ENCODE measurements at regions of chr1 and their contacts with region 1.

Region 1: DNA sequence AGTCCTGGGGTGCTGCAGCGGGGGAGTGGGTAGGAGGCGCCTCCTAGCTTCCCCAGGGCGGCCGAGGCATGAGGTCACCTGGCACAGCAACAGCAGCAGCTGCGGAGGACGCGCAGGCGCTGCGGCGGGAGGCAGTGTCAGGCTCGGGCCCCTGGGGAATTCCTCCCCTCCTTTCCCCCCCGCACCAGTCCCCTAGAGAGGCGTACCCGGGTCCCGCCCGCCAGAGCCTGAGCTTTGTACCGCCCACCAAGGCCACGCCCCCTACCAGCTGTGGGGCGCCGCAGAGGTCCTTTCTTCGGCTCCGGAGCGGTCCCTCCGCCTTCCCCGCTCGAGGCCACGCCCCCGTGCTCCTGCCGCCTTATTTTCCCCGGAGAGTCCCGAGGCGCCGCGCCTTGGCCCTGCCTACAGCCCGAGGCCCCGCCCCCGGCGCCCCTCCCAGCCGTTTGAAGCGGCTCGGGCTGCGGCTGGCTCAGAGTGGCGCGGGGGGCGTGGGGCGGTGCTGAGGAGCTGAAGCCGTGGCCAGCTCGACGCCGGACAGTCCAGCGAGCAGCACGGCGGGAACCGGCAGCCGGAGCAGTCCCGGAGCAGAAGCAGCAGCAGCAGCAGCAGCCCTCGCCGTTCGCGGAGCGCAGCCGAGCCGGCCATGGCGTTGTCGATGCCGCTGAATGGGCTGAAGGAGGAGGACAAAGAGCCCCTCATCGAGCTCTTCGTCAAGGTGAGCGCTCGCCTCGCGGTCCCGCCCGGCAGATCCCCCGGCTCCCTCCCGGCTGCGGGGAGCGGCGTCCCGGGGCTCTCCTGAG is at the start of gene CLIC4:
- DNase-seq: peak; percentile 94
- ATAC-seq: peak; percentile 93
- H3K4me3 ChIP-seq: peak within 1 kb of the TSS; percentile 62 to 80
- H3K27ac ChIP-seq: peak within 1 kb of the TSS; percentile 67
- H3K4me1 ChIP-seq: peaks cover 20 to 42% of the 10 kb centered on the region in 2 experiments
- H3K27me3 ChIP-seq: no peaks in the 10 kb centered on the region
- CTCF ChIP-seq: no peak
- POLR2A ChIP-seq: peak; percentile 42
- RAD21 ChIP-seq: peak; percentile 54
- total RNA-seq, gene CLIC4: 77.2 TPM

Region 2: DNA sequence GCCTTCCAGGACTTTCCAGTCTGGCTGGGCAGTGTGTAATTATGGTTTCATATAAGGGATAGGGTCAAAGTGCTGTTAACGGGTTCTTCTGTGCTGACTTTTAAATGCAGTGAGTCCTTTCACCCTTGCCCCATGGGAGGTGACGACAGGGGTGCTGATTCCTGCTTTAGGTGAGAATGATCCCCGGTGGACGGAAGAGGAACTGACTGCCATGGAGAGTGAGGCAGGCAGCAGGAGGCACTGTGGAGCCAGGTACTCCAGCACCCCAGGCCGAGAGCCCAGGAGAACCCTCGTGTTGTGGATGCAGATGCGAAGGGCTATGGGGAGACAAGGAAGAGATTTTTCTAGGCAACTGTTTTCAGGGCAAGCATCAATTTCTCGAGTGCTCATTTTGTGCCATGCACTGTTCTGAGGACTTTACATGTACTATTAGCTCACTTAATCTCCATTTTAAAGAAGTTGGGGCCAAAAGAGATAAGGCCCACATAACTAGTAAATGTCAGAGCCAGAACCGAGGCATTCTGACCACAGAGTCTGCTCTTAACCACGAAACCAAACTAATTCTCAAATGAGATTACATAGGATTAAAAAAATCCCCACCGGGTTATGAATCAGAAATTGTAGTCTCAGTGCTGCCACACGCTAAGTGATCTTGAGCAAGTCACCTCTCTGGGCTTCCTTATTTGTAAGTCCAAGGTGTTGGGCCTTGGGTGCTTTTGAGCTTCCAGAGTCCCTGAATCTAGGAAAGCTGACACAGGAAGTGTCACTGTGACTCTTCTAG is 359.8 kb before region 1 on chr1:
- CTCF ChIA-PET with region 1: no interaction called
- POLR2A ChIA-PET with region 1: no interaction called
- RAD21 ChIA-PET with region 1: no interaction called
- intact Hi-C with region 1: no loop called
- DNase-seq: no peak
- ATAC-seq: peak; percentile 92
- H3K4me3 ChIP-seq: no peak overlapping the region
- H3K27ac ChIP-seq: no peak overlapping the region
- H3K4me1 ChIP-seq: peaks cover 0 to 20% of the 10 kb centered on the region in 2 experiments; a peak in 2 of 4 replicates
- H3K27me3 ChIP-seq: no peaks in the 10 kb centered on the region
- CTCF ChIP-seq: peak; percentile 97 to 99 (median 98)
- POLR2A ChIP-seq: no peak
- RAD21 ChIP-seq: peak; percentile 81

Region 3: DNA sequence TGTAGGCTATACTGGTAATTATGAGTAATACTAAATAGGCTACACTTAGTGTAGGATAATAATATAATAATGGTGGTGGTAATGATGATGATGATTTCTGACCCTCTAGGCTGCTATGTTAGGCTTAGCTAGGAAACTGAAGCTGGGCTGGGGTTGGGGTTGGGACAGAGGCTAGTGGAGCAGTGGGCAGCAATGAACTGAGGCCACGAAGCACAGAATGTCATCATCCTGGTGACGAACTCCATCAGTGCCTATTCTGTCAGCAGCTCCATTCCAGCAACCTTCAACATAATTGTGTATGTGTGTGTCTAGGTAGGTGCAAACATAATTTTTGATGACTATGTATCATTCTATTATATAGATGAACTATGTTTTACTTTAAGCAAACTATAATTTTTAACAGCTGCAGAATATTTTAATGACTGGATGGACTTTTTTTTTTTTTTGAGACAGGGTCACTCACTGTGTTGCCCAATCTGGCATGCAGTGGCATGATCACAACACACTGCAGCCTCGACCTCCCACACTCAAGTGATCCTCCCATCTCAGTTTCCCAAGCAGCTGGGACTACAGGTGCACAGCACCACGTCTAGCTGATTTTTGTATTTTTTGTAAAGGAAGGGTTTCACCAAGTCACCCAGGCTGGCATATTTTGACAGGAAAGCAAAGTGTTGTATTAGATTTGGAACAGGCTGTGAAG is 12.8 kb before region 1 on chr1:
- CTCF ChIA-PET with region 1: interaction called, 7 read pairs
- POLR2A ChIA-PET with region 1: interaction called, 12 read pairs
- RAD21 ChIA-PET with region 1: no interaction called
- intact Hi-C with region 1: no loop called
- DNase-seq: no peak
- ATAC-seq: no peak
- H3K4me3 ChIP-seq: no peak overlapping the region
- H3K27ac ChIP-seq: no peak overlapping the region
- H3K4me1 ChIP-seq: peaks cover 0 to 15% of the 10 kb centered on the region in 2 experiments; a peak in 3 of 4 replicates
- H3K27me3 ChIP-seq: no peaks in the 10 kb centered on the region
- CTCF ChIP-seq: no peak
- POLR2A ChIP-seq: no peak
- RAD21 ChIP-seq: no peak

Region 4: GRCh38 chr1:24779689-24780464 is 34.8 kb after region 1 on chr1:
- CTCF ChIA-PET with region 1: no interaction called
- POLR2A ChIA-PET with region 1: no interaction called
- RAD21 ChIA-PET with region 1: no interaction called
- intact Hi-C with region 1: no loop called
- DNase-seq: no peak
- ATAC-seq: no peak
- H3K4me3 ChIP-seq: no peak overlapping the region
- H3K27ac ChIP-seq: no peak overlapping the region
- H3K4me1 ChIP-seq: no peaks in the 10 kb centered on the region
- H3K27me3 ChIP-seq: no peaks in the 10 kb centered on the region
- CTCF ChIP-seq: no peak
- POLR2A ChIP-seq: no peak
- RAD21 ChIP-seq: peak; percentile 19; the same call in 1 of the 2 replicates

Measured in HCT116 (cell line).